ENCODE measurements at regions of chr2 and their contacts with region 1.

Region 1: DNA sequence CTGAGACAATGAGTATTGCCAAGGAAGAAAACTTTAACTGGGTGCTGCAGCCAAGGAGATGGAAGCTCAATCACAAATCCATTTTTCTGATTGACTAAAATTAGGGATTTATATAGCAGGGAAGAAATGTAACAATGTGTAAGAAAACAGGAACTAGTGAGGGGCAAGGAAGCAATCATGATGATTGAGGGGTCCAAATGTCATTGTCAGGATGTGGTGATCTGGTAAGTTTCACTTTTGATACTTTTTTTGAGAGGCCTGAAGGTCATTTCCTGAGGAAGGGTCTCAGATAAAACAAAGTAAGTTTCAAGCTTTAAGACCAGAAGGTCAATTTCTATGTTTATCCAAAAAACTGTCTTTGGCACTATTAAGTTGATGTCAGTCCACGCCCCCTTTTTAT is 12.0 kb upstream of the GCC2 start:
- DNase-seq: no peak
- ATAC-seq: no peak
- H3K4me3 ChIP-seq: no peak overlapping the region
- H3K27ac ChIP-seq: no peak overlapping the region
- H3K4me1 ChIP-seq: no peaks in the 10 kb centered on the region
- H3K27me3 ChIP-seq: no peaks in the 10 kb centered on the region
- CTCF ChIP-seq: no peak
- EP300 ChIP-seq: no peak
- POLR2A ChIP-seq: no peak
- RAD21 ChIP-seq: no peak

Region 2: GRCh38 chr2:108154371-108155061 is 282.5 kb before region 1 on chr2:
- CTCF ChIA-PET with region 1: no interaction called
- POLR2A ChIA-PET with region 1: no interaction called
- in situ Hi-C with region 1: no loop called
- intact Hi-C with region 1: no loop called
- DNase-seq: no peak
- ATAC-seq: no peak
- H3K4me3 ChIP-seq: no peak overlapping the region
- H3K27ac ChIP-seq: no peak overlapping the region
- H3K4me1 ChIP-seq: no peaks in the 10 kb centered on the region
- H3K27me3 ChIP-seq: no peaks in the 10 kb centered on the region
- CTCF ChIP-seq: no peak
- EP300 ChIP-seq: no peak
- POLR2A ChIP-seq: no peak
- RAD21 ChIP-seq: no peak

Region 3: DNA sequence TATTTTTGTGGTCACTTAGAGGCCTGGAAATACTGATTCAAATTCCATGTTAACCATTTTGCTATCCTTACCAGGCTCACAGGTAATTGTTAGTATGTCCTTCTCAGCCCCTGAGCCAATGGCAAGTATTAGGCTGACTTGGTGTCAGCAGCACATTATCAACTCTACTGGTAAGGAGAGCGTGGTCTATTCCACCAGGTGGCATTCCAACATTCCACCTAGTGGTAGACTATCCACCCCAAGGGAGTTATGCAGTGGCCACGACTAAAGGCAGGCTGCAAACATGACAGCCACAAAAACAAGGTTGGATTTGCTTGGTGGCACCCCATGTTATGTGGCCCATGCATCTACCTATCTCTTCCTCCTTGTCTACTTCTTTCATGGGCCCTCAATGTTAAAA is 19.7 kb before region 1 on chr2:
- CTCF ChIA-PET with region 1: no interaction called
- POLR2A ChIA-PET with region 1: interaction called, 4 read pairs
- in situ Hi-C with region 1: no loop called
- intact Hi-C with region 1: loop called (anchors 1 kb)
- DNase-seq: peak in 2 of 4 experiments; percentile 35 to 44
- ATAC-seq: peak; percentile 90
- H3K4me3 ChIP-seq: no peak overlapping the region
- H3K27ac ChIP-seq: no peak overlapping the region
- H3K4me1 ChIP-seq: peaks cover 0 to 16% of the 10 kb centered on the region in 2 experiments; a peak in 2 of 5 replicates
- H3K27me3 ChIP-seq: no peaks in the 10 kb centered on the region
- CTCF ChIP-seq: peak; percentile 45 to 95 (median 74); a peak in 5 of 6 replicates
- EP300 ChIP-seq: no peak
- POLR2A ChIP-seq: no peak
- RAD21 ChIP-seq: peak in 1 of 2 experiments; percentile 64; a peak in 2 of 4 replicates

Region 4: DNA sequence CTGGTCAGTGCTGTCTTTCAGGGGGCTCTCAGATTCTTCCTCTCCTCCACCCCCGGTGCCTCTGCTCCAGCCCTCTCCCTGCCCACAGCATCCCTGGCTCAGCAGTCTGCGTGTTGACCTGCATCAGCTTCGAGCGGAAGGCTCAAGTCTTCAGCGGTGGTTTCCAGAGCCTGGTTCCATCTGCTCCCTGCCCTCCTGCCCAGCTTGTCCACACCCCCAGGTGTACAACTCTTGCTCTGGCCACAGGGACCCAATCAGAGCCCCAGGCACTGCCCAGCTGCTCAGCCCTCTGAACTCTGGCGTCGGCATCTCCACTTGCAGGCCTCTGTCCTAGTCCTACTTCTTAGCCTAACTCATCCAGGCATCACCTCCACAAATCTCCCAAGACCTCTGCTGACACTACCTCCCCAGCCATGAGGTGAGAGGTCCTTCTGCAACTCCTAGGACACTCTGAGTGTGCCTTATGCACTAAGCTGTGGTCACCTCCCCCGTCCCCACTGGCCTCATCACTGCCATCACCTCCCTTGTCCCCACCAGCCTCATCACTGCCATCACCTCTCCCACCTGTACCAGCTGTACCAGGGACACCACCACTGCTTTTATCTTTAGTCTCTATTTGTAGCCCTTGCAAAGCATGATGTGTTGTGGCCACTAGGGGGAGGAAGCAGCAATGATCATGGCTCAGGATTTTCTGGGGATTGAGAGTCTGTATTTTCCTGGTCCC is 491.1 kb after region 1 on chr2:
- CTCF ChIA-PET with region 1: no interaction called
- POLR2A ChIA-PET with region 1: no interaction called
- in situ Hi-C with region 1: no loop called
- intact Hi-C with region 1: no loop called
- DNase-seq: peak; percentile 57 to 68 (median 64)
- ATAC-seq: peak; percentile 78
- H3K4me3 ChIP-seq: no peak overlapping the region
- H3K27ac ChIP-seq: no peak overlapping the region
- H3K4me1 ChIP-seq: no peaks in the 10 kb centered on the region
- H3K27me3 ChIP-seq: peaks cover 30 to 85% of the 10 kb centered on the region in 2 experiments; a peak in 4 of 5 replicates
- CTCF ChIP-seq: peak; percentile 69 to 81 (median 73)
- EP300 ChIP-seq: no peak
- POLR2A ChIP-seq: no peak
- RAD21 ChIP-seq: peak; percentile 49 to 78

Measured in K562 (cell line).